ENCODE measurements at regions of chr6 and their contacts with region 1.

Region 1: GRCh38 chr6:70310063-70310694 is 7.3 kb upstream of the COL9A1 start:
- DNase-seq: no peak
- H3K4me3 ChIP-seq: no peak overlapping the region
- H3K27ac ChIP-seq: no peak overlapping the region
- H3K4me1 ChIP-seq: no peaks in the 10 kb centered on the region
- H3K27me3 ChIP-seq: no peaks in the 10 kb centered on the region
- CTCF ChIP-seq: peak; percentile 36 to 67 (median 44)
- POLR2A ChIP-seq: no peak

Region 2: GRCh38 chr6:68778356-68779020 is 1531.7 kb before region 1 on chr6:
- intact Hi-C with region 1: no loop called
- DNase-seq: peak; percentile 32
- H3K4me3 ChIP-seq: no peak overlapping the region
- H3K27ac ChIP-seq: no peak overlapping the region
- H3K4me1 ChIP-seq: no peaks in the 10 kb centered on the region
- H3K27me3 ChIP-seq: no peaks in the 10 kb centered on the region
- CTCF ChIP-seq: peak; percentile 45 to 62 (median 52)
- POLR2A ChIP-seq: no peak

Region 3: DNA sequence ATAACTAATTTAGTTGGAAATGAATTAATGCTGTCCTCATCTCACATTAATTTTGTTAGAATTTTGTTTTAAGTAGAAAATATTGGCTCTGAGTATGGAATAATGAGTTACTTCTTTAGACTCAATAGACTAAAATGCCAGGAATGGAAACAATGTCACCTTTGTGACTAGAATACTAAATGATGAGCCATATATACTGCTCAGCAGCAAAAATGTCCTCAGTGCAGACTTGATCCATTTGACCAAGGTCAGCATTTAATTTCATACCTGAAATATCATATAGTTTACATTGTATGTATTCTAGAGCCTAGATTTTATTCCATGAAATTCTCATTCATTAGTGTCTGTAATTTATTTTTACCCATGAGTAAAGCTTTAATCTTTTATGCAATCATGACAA is 1457.4 kb before region 1 on chr6:
- intact Hi-C with region 1: no loop called
- DNase-seq: no peak
- H3K4me3 ChIP-seq: no peak overlapping the region
- H3K27ac ChIP-seq: no peak overlapping the region
- H3K4me1 ChIP-seq: no peaks in the 10 kb centered on the region
- H3K27me3 ChIP-seq: no peaks in the 10 kb centered on the region
- CTCF ChIP-seq: no peak
- POLR2A ChIP-seq: no peak

Region 4: GRCh38 chr6:70369332-70369950 is 59.3 kb after region 1 on chr6:
- intact Hi-C with region 1: loop called (anchors 10 kb)
- DNase-seq: peak; percentile 64
- H3K4me3 ChIP-seq: no peak overlapping the region
- H3K27ac ChIP-seq: no peak overlapping the region
- H3K4me1 ChIP-seq: no peaks in the 10 kb centered on the region
- H3K27me3 ChIP-seq: no peaks in the 10 kb centered on the region
- CTCF ChIP-seq: peak; percentile 71 to 89 (median 87)
- POLR2A ChIP-seq: no peak